ENCODE measurements at regions of chr9 and their contacts with region 1.

Region 1: DNA sequence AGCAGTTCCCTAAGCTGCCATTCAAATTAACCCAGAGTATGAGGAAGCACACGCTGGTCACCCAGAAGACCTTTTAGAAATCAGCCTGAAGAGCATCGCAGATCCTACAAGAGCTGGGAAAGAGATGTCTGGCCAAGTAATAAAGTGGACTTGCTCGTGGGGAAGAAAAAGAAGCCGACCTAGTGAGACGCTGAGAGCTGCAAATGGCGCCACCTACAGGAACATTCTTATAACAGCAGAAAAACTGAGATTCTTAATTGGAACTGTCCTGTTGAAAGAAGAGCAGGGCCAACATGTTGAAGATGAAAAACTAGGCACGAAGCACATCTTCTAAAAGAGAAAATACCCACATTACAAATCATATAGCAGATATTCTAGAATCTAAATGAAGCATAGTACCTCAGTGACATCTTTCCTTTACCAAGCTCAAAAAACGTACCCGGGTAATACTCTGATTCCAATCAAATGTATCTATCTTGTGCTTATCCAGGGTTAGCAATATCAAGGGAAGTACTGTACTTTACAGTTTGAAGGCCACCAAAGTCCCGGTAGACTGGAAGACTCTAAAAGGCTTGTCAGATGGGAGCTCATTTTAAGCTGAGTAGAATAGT is 3.9 kb upstream of the GNAQ start:
- DNase-seq: peak; percentile 64
- ATAC-seq: no peak

Region 2: DNA sequence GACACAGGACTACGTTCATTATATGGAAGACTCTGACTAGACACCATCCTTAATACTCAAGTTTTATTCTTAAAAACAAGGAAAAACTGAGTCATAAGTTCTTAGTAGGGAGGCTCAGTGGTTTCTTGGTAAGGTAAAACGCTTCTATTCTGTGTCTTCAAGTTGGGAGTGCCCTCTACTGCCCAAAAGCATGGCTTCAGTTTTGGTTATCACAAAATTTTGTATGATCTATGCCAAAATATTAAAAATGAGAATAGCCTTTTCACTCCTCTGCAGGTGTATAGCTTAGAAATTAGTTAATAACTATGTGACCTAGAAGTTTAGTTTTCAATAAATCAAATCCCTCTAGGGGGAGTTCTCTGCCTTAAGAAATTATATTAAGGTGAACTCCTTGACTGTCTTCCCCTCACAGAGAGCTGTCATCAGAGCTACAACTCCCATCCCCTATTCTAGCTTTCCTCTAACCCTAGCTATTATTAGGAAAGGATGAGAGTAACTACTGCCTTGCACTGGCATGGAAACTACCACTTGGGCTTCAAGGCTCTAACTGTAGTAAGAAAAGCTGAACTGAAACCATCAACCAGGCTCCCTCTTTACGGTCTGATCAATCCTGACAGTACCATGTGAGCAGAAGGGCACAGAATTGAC is 193.6 kb before region 1 on chr9:
- intact Hi-C with region 1: loop called (anchors 2 kb)
- DNase-seq: no peak
- ATAC-seq: no peak

Region 3: GRCh38 chr9:77977210-77977611 is 58.3 kb before region 1 on chr9:
- intact Hi-C with region 1: loop called (anchors 2 kb)
- DNase-seq: no peak
- ATAC-seq: peak; percentile 89

Region 4: DNA sequence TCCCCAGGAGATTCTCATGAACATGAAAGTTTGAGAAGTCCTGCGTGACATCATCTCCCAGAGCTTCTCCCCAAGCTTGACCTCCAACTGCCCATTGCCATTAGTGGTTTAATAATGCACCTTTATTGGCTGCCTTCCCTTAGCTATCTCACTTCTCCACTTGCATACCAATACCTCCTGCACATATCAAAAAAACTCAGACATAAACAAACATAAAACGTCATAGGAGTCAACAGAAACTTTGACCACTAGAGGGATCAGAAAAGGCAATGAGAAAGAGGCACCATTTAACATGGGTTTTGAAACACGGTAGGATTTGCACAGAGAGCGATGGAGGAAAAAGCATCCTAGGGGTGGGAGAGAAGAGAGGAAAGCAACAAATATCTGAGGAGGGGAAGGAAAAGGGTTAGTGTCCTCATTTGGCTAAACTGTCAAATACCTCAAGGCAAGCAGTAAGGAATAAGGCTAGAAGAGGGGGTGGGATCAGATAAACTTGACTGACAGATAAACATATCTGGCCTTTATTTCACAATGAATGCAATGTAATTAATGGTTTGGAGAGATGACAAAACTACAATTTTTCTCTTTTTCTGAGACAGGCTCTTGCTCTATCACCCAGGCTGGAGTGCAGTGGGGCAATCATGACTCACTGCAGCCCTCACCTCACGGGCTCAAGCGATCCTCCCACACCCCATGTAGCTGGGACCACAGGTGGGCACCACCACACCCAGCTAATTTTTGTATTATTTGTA is 30.8 kb before region 1 on chr9:
- intact Hi-C with region 1: no loop called
- DNase-seq: no peak
- ATAC-seq: no peak

Region 5: GRCh38 chr9:78121488-78121887 is 86.0 kb after region 1 on chr9:
- intact Hi-C with region 1: no loop called
- DNase-seq: peak; percentile 73
- ATAC-seq: no peak